Activated CD8-positive, alpha-beta T cell treated with anti-CD3 and anti-CD28 coated beads, Interleukin-2, amount 10 ng/mL, durations not matched to agents 7 days and 5 days (primary cell): ENCODE measurements at regions of chr2 and their contacts with region 1.

Region 1: GRCh38 chr2:233353769-233354499 is at the start of gene DGKD:
- DNase-seq: peak; percentile 79
- ATAC-seq: peak; percentile 76
- H3K4me3 Mint-ChIP-seq: peak within 1 kb of the TSS; percentile 85
- H3K27ac Mint-ChIP-seq: peak within 1 kb of the TSS; percentile 94
- H3K4me1 Mint-ChIP-seq: peaks cover 82% of the 10 kb centered on the region
- H3K27me3 Mint-ChIP-seq: no peaks in the 10 kb centered on the region
- total RNA-seq, gene DGKD: 92.1 to 94.2 TPM

Region 2: GRCh38 chr2:233217892-233218377 is 136.0 kb before region 1 on chr2:
- CTCF ChIA-PET with region 1: no interaction called
- POLR2A ChIA-PET with region 1: no interaction called
- DNase-seq: no peak
- ATAC-seq: no peak
- H3K4me3 Mint-ChIP-seq: no peak overlapping the region
- H3K27ac Mint-ChIP-seq: no peak overlapping the region
- H3K4me1 Mint-ChIP-seq: no peaks in the 10 kb centered on the region
- H3K27me3 Mint-ChIP-seq: peaks cover 4% of the 10 kb centered on the region

Region 3: GRCh38 chr2:233267516-233268245 is 86.3 kb before region 1 on chr2:
- CTCF ChIA-PET with region 1: interaction called, 14 read pairs
- POLR2A ChIA-PET with region 1: interaction called, 5 read pairs
- DNase-seq: peak; percentile 95
- ATAC-seq: peak; percentile 97
- H3K4me3 Mint-ChIP-seq: peak overlapping the region; percentile 65
- H3K27ac Mint-ChIP-seq: peak overlapping the region; percentile 92
- H3K4me1 Mint-ChIP-seq: peaks cover 70% of the 10 kb centered on the region
- H3K27me3 Mint-ChIP-seq: no peaks in the 10 kb centered on the region

Region 4: DNA sequence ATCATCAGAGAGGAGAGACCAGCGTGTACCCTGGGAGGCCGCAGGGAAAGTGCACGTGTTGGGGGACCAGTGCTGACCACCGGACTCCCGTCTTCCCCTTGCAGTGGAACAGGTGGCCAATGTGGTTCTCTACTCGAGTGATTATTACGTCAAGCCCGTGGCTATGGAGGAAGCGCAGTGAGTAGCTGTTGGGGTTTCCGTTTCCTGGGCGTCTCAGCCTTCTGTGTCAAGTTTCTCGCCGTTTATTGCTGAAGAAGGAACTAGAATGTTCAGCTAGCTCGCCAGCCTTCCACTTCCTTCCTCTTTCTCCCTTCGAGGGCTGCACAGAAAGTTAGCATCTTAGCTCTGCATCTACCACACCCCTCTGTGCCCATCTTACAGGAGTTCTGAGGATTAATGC is 22.4 kb before region 1 on chr2:
- CTCF ChIA-PET with region 1: interaction called, 21 read pairs
- POLR2A ChIA-PET with region 1: interaction called, 10 read pairs
- DNase-seq: peak; percentile 92
- ATAC-seq: peak; percentile 95
- H3K4me3 Mint-ChIP-seq: peak overlapping the region; percentile 61
- H3K27ac Mint-ChIP-seq: peak overlapping the region; percentile 99
- H3K4me1 Mint-ChIP-seq: peaks cover 60% of the 10 kb centered on the region
- H3K27me3 Mint-ChIP-seq: no peaks in the 10 kb centered on the region

Region 5: GRCh38 chr2:233385489-233386044 is 31.6 kb after region 1 on chr2:
- CTCF ChIA-PET with region 1: interaction called, 13 read pairs
- POLR2A ChIA-PET with region 1: interaction called, 9 read pairs
- DNase-seq: peak; percentile 77
- ATAC-seq: peak; percentile 87
- H3K4me3 Mint-ChIP-seq: peak overlapping the region; percentile 66
- H3K27ac Mint-ChIP-seq: peak overlapping the region; percentile 97
- H3K4me1 Mint-ChIP-seq: peaks cover 87% of the 10 kb centered on the region
- H3K27me3 Mint-ChIP-seq: no peaks in the 10 kb centered on the region

Region 6: GRCh38 chr2:233404222-233404621 is 50.3 kb after region 1 on chr2:
- CTCF ChIA-PET with region 1: interaction called, 10 read pairs
- POLR2A ChIA-PET with region 1: interaction called, 4 read pairs
- DNase-seq: peak; percentile 77
- ATAC-seq: peak; percentile 40
- H3K4me3 Mint-ChIP-seq: no peak overlapping the region
- H3K27ac Mint-ChIP-seq: peak overlapping the region; percentile 31
- H3K4me1 Mint-ChIP-seq: peaks cover 68% of the 10 kb centered on the region
- H3K27me3 Mint-ChIP-seq: no peaks in the 10 kb centered on the region